H1 (cell line): ENCODE measurements at regions of chr4 and their contacts with region 1.

Region 1: GRCh38 chr4:57426779-57427395 is 316.7 kb upstream of the IGFBP7 start:
- DNase-seq: peak; percentile 66 to 81
- H3K4me3 ChIP-seq: no peak overlapping the region
- H3K27ac ChIP-seq: no peak overlapping the region
- H3K4me1 ChIP-seq: no peaks in the 10 kb centered on the region
- H3K27me3 ChIP-seq: no peaks in the 10 kb centered on the region
- CTCF ChIP-seq: peak; percentile 71 to 92 (median 88)
- EP300 ChIP-seq: no peak
- POLR2A ChIP-seq: no peak
- RAD21 ChIP-seq: peak; percentile 94 to 95

Region 2: DNA sequence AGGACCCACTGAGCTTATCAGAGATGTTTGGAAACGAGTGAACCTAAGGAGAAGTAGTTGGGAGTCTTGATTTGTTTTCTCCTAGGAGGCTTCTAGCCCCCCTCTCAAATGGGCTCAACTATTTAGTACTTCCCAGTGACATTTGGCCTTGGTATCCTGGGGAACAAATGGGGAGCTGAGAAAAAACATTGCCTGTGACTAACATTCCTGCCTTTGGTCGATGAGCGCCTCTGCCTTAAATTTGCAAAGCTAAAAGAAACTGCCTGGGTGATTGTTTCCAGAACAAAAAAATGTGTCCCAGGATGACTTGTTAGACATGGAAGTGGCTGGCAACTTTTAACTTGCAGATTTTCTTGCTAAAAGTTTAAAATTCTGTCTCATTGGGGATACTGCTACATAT is 257.9 kb before region 1 on chr4:
- CTCF ChIA-PET with region 1: interaction called, 96 read pairs
- POLR2A ChIA-PET with region 1: no interaction called
- DNase-seq: no peak
- H3K4me3 ChIP-seq: no peak overlapping the region
- H3K27ac ChIP-seq: no peak overlapping the region
- H3K4me1 ChIP-seq: peaks cover 0 to 3% (median 1%) of the 10 kb centered on the region in 4 experiments; a peak in 3 of 7 replicates
- H3K27me3 ChIP-seq: peaks cover 0 to 10% (median 9%) of the 10 kb centered on the region in 4 experiments; a peak in 4 of 7 replicates
- CTCF ChIP-seq: no peak
- EP300 ChIP-seq: no peak
- POLR2A ChIP-seq: no peak
- RAD21 ChIP-seq: no peak

Region 3: DNA sequence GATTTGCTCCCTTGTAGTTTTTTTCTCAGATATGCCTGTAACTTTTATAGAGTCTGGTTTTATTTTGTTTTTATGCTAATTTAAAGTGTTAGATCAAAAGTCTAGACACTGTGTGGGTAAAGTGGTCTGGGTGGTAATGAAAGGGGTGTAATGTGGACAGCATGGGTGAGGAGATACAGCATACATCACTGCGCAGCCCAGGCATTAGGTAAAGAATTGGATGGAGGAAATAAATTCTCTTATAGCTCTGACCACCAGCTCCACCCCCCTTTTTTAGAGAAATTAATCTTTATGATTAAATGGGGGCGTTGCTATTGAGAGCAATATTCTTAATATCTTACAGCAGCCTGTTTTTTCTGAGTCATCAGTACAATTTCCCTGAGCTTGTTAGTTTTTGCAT is 152.8 kb before region 1 on chr4:
- CTCF ChIA-PET with region 1: no interaction called
- POLR2A ChIA-PET with region 1: no interaction called
- DNase-seq: no peak
- H3K4me3 ChIP-seq: no peak overlapping the region
- H3K27ac ChIP-seq: no peak overlapping the region
- H3K4me1 ChIP-seq: peaks cover 0 to 6% (median 0%) of the 10 kb centered on the region in 4 experiments; a peak in 1 of 7 replicates
- H3K27me3 ChIP-seq: no peaks in the 10 kb centered on the region
- CTCF ChIP-seq: no peak
- EP300 ChIP-seq: no peak
- POLR2A ChIP-seq: no peak
- RAD21 ChIP-seq: no peak

Region 4: GRCh38 chr4:57410331-57411052 is 16.4 kb before region 1 on chr4:
- CTCF ChIA-PET with region 1: interaction called, 14 read pairs
- POLR2A ChIA-PET with region 1: no interaction called
- DNase-seq: no peak
- H3K4me3 ChIP-seq: no peak overlapping the region
- H3K27ac ChIP-seq: no peak overlapping the region
- H3K4me1 ChIP-seq: no peaks in the 10 kb centered on the region
- H3K27me3 ChIP-seq: no peaks in the 10 kb centered on the region
- CTCF ChIP-seq: no peak
- EP300 ChIP-seq: no peak
- POLR2A ChIP-seq: no peak
- RAD21 ChIP-seq: no peak

Region 5: DNA sequence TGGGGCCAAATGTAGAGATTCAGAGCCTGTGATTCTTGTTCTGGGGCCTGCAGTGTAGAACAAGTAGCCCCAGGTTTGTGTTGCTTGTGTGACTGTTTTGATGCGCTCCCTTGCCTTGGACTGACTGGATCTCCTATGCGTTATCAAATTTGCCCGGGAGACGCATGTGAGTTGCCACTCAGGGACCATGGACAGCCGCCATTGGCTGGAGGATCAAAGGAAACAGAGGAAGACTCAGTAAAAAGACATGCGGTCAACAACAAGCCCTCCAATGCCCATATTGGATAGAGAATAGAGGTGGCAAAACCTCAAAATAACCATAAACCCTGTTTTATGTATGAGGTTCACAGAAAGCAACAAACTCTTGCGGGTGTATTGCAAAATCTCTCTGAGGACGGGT is 10.8 kb after region 1 on chr4:
- CTCF ChIA-PET with region 1: interaction called, 37 read pairs
- POLR2A ChIA-PET with region 1: no interaction called
- DNase-seq: no peak
- H3K4me3 ChIP-seq: no peak overlapping the region
- H3K27ac ChIP-seq: no peak overlapping the region
- H3K4me1 ChIP-seq: no peaks in the 10 kb centered on the region
- H3K27me3 ChIP-seq: no peaks in the 10 kb centered on the region
- CTCF ChIP-seq: no peak
- EP300 ChIP-seq: no peak
- POLR2A ChIP-seq: no peak
- RAD21 ChIP-seq: no peak

Region 6: DNA sequence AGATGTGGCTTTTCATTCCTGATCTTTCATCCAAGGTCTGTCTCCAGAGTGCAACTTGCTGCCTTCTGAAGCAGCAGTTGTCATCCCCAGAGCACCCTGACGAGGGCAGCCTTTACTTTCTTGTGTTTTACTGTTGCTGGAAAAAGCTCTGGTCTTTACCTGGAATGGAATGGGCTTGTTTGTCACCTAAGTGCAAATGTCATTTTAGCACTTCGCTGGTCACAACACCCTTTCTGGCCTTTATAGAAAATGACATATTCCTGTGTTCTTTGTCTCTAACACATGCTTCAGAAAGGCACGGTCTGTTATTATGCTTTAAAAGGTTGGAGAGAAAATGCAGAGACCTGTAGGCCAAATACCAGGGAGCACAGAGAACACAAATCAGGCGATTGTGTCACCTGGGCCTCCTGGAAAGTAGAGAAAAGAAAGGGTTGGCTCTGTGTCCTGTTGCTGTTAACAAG is 16.0 kb after region 1 on chr4:
- CTCF ChIA-PET with region 1: interaction called, 37 read pairs
- POLR2A ChIA-PET with region 1: no interaction called
- DNase-seq: peak; percentile 39 to 80
- H3K4me3 ChIP-seq: no peak overlapping the region
- H3K27ac ChIP-seq: no peak overlapping the region
- H3K4me1 ChIP-seq: no peaks in the 10 kb centered on the region
- H3K27me3 ChIP-seq: no peaks in the 10 kb centered on the region
- CTCF ChIP-seq: peak; percentile 76 to 94 (median 77)
- EP300 ChIP-seq: no peak
- POLR2A ChIP-seq: no peak
- RAD21 ChIP-seq: peak; percentile 98